Ascending aorta (tissue), 2 donors: ENCODE measurements at regions of chr5 and their contacts with region 1.

Region 1: DNA sequence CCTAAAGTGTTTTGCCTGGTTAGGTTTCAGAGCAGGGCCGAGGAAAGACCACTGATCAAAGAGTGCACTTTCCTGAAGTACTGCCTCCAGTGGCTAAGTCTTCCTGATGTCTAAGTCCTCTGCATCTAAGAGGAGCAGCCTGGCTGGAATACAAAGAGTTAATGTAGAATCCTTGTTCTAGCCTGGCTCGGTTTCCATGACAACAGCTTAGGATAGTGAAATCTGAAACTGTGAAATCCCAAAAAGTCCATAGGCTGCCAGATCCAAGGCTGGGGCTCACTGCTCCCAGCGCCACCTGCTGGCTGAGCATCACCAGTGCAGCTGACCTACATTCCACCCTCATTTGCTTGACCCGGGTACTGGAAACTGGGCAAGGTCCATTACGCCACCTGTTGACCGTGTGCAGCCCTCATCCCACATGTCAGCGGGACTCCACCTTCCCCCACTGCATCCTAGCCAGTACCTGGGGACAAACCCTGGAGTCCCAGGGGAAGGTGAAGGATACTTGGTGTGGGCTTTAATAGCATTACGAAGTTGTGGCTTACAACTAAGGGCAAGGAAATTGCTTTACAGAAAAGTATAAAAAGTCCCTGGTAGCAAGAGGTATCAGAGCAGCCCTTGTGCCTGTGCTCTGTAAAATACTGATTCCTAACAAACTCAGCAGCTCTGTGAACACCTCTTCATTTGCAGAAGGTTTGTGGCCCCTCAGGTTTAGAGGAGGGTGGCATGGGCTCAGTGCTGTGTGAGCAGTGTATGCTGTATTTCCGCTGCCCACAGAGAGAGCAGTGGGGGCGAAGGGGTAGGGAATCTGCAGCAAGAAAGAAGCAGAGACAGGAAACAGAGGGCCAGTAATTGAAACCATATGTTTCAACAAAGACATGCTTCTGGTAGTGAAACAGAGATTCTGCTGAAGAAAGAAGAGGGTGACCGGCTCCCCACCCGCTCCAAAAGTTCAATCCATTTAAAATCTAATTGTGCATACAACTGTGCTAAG is 36.0 kb downstream of the PCDHGC5 start:
- DNase-seq: peak in 1 of 2 donors; percentile 95
- H3K4me3 ChIP-seq: no peak overlapping the region
- H3K27ac ChIP-seq: peak overlapping the region; percentile 66 to 71
- H3K4me1 ChIP-seq: peaks cover 7 to 44% of the 10 kb centered on the region in 2 donors
- H3K27me3 ChIP-seq: no peaks in the 10 kb centered on the region
- CTCF ChIP-seq: peak; percentile 98 to 100 (median 99)

Region 2: DNA sequence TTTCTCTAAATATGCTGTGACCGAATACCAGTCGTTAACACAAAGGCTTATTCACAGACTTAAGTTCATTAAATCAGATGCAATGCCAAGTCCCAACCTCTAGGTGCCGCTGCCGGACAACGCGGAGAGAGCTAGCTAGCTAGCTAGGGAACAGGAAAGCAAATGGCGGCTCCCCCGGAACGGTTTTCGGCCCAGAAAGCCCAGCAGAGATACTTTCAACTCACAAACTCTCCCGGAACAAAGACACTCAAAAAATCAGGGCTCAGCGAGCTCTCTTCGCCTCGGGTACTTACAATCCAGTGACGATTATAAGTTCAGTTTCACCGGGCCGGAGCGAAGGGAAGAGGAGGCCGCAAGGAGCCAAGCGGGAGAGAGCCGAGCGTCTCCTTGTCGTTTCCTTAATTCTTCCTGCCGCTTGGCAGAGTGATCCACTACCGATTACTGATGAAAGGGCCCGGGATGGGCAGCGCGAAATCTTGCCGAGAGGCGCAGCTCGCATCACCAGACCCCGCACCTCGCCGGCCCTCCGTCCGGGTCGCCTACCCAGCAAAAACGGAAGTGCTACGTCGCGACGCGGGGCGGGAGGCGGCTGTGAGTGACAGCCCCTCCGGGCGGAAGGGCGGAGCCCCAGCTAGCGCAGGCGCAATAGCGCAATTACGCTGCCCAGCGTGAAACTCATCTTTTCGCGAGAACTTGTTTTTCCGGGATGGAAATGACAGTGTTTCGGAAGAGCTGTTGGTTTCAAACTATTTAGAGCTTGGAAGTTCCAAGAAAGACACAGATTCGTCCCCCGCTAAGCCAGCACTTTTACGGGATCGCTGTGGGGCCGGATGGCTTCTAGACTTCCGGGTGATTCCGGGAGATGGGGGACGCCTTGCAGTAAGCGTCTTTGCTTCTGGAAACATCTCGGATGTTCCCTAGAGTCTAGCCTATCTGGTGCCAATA is 204.4 kb before region 1 on chr5 and contains the start of gene TAF7:
- intact Hi-C with region 1: loop called (anchors 5 kb)
- DNase-seq: peak; percentile 47 to 91
- H3K4me3 ChIP-seq: peak within 1 kb of the TSS; percentile 76 to 92
- H3K27ac ChIP-seq: peak within 1 kb of the TSS; percentile 93 to 99
- H3K4me1 ChIP-seq: peaks cover 0 to 4% of the 10 kb centered on the region in 2 donors
- H3K27me3 ChIP-seq: no peaks in the 10 kb centered on the region
- CTCF ChIP-seq: peak; percentile 61 to 86 (median 86)
- total RNA-seq, gene TAF7: 30.1 TPM

Region 3: DNA sequence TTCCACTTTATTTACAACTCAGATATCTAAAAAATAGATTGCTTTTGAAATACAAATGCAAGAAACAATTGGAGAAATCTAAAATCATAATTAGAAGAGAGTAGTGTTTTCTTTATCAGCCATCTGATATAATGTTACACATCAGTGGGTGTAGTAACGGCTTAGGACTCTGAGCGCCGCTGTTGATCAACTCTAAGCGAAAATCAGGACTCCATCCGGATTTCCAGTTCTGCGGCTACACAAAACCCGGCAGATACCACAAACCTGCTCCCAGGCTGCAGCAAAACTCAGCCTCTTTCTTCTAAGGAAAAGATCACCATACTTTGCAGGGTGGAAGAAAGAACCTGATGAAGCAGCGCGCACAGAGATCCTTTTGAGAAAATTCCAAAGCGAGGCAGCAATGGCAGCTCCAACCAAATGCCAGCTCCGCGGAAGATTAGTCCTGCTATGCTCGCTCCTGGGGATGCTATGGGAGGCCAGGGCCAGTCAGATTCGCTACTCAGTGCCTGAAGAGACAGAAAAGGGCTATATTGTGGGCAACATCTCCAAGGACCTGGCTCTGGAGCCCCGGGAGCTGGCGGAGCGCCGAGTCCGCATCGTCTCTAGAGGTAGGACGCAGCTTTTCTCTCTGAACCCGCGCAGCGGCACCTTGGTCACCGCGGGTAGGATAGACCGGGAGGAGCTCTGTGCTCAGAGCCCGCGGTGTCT is 122.2 kb before region 1 on chr5 and contains the start of gene PCDHGA9:
- intact Hi-C with region 1: loop called (anchors 10 kb)
- DNase-seq: no peak
- H3K4me3 ChIP-seq: peak within 1 kb of the TSS; percentile 37 to 45
- H3K27ac ChIP-seq: no peak within 1 kb of the TSS
- H3K4me1 ChIP-seq: no peaks in the 10 kb centered on the region
- H3K27me3 ChIP-seq: no peaks in the 10 kb centered on the region
- CTCF ChIP-seq: peak in 2 of 3 experiments; percentile 20 to 23
- total RNA-seq, gene PCDHGA9: 3.2 TPM

Region 4: DNA sequence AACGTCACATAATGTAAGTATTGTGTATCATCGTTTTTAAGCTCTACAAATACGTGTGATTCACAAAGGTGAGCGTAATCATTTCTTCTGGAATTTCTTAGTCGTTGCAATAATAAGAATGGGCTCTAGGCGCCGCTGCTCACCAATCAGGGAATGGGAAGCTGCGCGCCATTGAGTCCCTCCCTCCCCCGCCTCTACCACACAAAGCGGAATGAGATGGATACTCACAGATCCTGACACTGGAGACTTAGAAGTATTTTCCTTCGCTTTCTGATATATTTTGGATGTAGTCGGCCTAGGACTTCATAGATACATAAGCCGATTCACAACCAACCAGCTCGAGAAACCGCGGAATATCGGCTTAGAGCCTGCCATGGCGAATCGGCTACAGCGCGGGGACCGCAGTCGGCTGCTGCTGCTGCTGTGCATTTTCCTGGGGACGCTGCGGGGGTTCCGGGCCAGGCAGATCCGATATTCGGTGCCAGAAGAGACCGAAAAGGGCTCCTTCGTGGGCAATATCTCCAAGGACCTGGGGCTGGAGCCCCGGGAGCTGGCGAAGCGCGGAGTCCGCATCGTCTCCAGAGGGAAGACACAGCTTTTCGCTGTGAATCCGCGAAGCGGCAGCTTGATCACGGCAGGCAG is 103.9 kb before region 1 on chr5 and contains the start of gene PCDHGA11:
- intact Hi-C with region 1: loop called (anchors 5 kb)
- DNase-seq: no peak
- H3K4me3 ChIP-seq: peak within 1 kb of the TSS; percentile 40 to 44
- H3K27ac ChIP-seq: no peak within 1 kb of the TSS
- H3K4me1 ChIP-seq: no peaks in the 10 kb centered on the region
- H3K27me3 ChIP-seq: no peaks in the 10 kb centered on the region
- CTCF ChIP-seq: peak in 1 of 3 experiments; percentile 26
- total RNA-seq, gene PCDHGA11: 5.3 TPM

Region 5: GRCh38 chr5:141475625-141476131 is 49.2 kb before region 1 on chr5 and contains the start of gene PCDHGC3:
- intact Hi-C with region 1: loop called (anchors 1 kb)
- DNase-seq: peak; percentile 83 to 96
- H3K4me3 ChIP-seq: peak within 1 kb of the TSS; percentile 77 to 83
- H3K27ac ChIP-seq: peak within 1 kb of the TSS; percentile 90 to 92
- H3K4me1 ChIP-seq: peaks cover 15 to 34% of the 10 kb centered on the region in 2 donors
- H3K27me3 ChIP-seq: no peaks in the 10 kb centered on the region
- CTCF ChIP-seq: peak; percentile 25 to 57 (median 57)
- total RNA-seq, gene PCDHGC3: 51.4 TPM

Region 6: GRCh38 chr5:141512390-141512910 is 12.5 kb before region 1 on chr5:
- intact Hi-C with region 1: loop called (anchors 1 kb)
- DNase-seq: peak in 1 of 2 donors; percentile 93
- H3K4me3 ChIP-seq: peak overlapping the region; percentile 52 to 78
- H3K27ac ChIP-seq: peak overlapping the region; percentile 98 to 99
- H3K4me1 ChIP-seq: peaks cover 36 to 51% of the 10 kb centered on the region in 2 donors
- H3K27me3 ChIP-seq: no peaks in the 10 kb centered on the region
- CTCF ChIP-seq: peak; percentile 83 to 87 (median 86)

Region 7: GRCh38 chr5:141557681-141558136 is 32.8 kb after region 1 on chr5:
- intact Hi-C with region 1: loop called (anchors 1 kb)
- DNase-seq: peak; percentile 63 to 92
- H3K4me3 ChIP-seq: peak overlapping the region; percentile 0 to 38
- H3K27ac ChIP-seq: peak overlapping the region; percentile 83 to 86
- H3K4me1 ChIP-seq: peaks cover 6 to 30% of the 10 kb centered on the region in 2 donors
- H3K27me3 ChIP-seq: no peaks in the 10 kb centered on the region
- CTCF ChIP-seq: peak; percentile 70 to 74 (median 73)